GM12878 (cell line): ENCODE measurements at regions of chr4 and their contacts with region 1.

Region 1: GRCh38 chr4:973431-974397 is at the start of gene DGKQ:
- DNase-seq: no peak
- ATAC-seq: peak; percentile 88
- H3K4me3 ChIP-seq: peak within 1 kb of the TSS; percentile 75
- H3K27ac ChIP-seq: no peak within 1 kb of the TSS
- H3K4me1 ChIP-seq: peaks cover 5% of the 10 kb centered on the region; the same call in 1 of the 2 replicates
- H3K27me3 ChIP-seq: no peaks in the 10 kb centered on the region
- CTCF ChIP-seq: no peak
- EP300 ChIP-seq: no peak
- POLR2A ChIP-seq: peak; percentile 61; the same call in 1 of the 2 replicates
- RAD21 ChIP-seq: no peak
- polyA plus RNA-seq, gene DGKQ: 0.11 to 0.46 TPM

Region 2: GRCh38 chr4:931960-932712 is 41.6 kb before region 1 on chr4 and contains the starts of genes GAK and TMEM175:
- CTCF ChIA-PET with region 1: no interaction called
- POLR2A ChIA-PET with region 1: interaction called, 3 read pairs
- RAD21 ChIA-PET with region 1: no interaction called
- SMC1A ChIA-PET with region 1: no interaction called
- in situ Hi-C with region 1: no loop called
- intact Hi-C with region 1: loop called (anchors 5 kb)
- DNase-seq: peak; percentile 87
- ATAC-seq: peak; percentile 89
- H3K4me3 ChIP-seq: peak within 1 kb of the TSS; percentile 98
- H3K27ac ChIP-seq: peak within 1 kb of the TSS; percentile 90
- H3K4me1 ChIP-seq: peaks cover 27% of the 10 kb centered on the region
- H3K27me3 ChIP-seq: no peaks in the 10 kb centered on the region
- CTCF ChIP-seq: no peak
- EP300 ChIP-seq: no peak
- POLR2A ChIP-seq: peak; percentile 98
- RAD21 ChIP-seq: no peak
- polyA plus RNA-seq, gene GAK: 0.82 to 5.7 TPM
- polyA plus RNA-seq, gene TMEM175: 0.11 to 0.22 TPM